ENCODE measurements at regions of chr19 and their contacts with region 1.

Region 1: DNA sequence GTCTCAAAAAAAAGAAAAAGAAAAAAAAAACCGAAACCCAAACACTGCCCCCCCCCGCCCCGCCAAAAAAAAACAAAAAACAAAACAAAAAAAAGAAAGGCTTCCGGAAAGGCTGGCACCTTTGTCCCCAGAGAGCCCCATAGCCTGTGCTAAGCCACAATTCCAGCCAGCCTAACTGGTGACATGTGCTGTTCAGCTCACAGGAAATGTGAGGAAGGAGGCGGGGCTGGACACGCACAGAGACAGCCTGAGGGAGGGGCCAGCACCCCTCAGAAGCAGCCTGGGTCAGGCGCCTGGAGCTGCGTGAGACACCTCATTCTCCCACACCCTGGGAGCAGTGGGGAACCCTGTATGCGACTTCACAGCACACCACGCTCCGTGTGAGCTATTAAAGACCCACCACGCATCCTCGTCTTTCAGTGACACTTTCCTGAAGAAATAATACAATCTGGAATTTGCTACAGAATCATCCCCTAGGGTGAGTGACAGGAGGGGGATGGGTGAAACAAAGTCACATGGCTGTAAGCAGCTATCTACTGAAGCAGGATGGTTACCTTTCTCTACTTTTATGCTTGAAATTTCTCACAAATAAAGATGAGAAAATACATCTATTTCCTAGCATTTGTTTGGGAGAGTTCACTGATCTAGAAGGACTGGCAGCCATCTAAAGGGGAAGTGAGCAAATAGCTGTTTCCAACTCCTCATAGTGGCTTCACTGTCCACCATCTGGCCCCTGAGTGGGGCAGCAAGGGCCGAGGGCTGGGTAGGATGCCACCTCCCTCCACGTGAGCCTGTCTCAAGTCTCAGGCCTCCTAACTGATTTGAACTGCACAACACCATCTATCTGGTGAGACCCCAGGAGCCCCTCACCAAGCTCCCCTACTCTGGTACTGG is 12.3 kb upstream of the SLC35E1 start:
- DNase-seq: peak; percentile 91 to 98
- ATAC-seq: peak; percentile 80 to 93 (median 82)
- H3K4me3 ChIP-seq: peak overlapping the region; percentile 44
- H3K4me3 Mint-ChIP-seq: peak overlapping the region; percentile 74
- H3K27ac ChIP-seq: peak overlapping the region; percentile 88
- H3K27ac Mint-ChIP-seq: peak overlapping the region; percentile 88 to 89
- H3K4me1 ChIP-seq: peaks cover 81% of the 10 kb centered on the region
- H3K4me1 Mint-ChIP-seq: peaks cover 54 to 86% of the 10 kb centered on the region in 2 donors
- H3K27me3 ChIP-seq: no peaks in the 10 kb centered on the region
- H3K27me3 Mint-ChIP-seq: no peaks in the 10 kb centered on the region
- CTCF ChIP-seq: no peak

Region 2: DNA sequence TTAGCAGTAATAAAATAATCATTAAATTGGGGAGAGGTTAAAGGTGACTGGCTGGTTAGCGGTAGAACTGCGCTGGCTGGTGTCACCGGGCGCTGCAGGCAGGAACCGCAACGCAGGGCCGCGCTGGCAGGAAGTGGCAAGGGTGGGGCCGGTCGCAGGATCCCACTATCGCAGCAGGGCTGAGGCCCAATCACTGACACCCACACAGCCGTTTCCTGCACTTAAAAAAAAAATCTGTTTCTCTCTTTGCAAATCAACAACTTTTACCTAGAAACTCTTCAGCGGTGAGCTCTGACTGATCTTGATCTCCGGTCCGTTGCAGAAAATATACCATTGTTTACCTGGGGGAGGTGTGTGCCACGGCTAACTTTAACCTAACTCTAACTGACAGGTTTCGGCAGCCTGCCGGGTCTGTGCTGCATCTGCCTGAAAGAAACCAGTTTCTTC is 212.9 kb before region 1 on chr19:
- intact Hi-C with region 1: loop called (anchors 5 kb)
- DNase-seq: peak; percentile 90 to 96
- ATAC-seq: peak; percentile 48 to 78 (median 73)
- H3K4me3 ChIP-seq: peak overlapping the region; percentile 13
- H3K4me3 Mint-ChIP-seq: no peak overlapping the region
- H3K27ac ChIP-seq: peak overlapping the region; percentile 94
- H3K27ac Mint-ChIP-seq: no peak overlapping the region
- H3K4me1 ChIP-seq: peaks cover 99% of the 10 kb centered on the region
- H3K4me1 Mint-ChIP-seq: peaks cover 33 to 34% of the 10 kb centered on the region in 2 donors
- H3K27me3 ChIP-seq: no peaks in the 10 kb centered on the region
- H3K27me3 Mint-ChIP-seq: no peaks in the 10 kb centered on the region
- CTCF ChIP-seq: no peak

Region 3: DNA sequence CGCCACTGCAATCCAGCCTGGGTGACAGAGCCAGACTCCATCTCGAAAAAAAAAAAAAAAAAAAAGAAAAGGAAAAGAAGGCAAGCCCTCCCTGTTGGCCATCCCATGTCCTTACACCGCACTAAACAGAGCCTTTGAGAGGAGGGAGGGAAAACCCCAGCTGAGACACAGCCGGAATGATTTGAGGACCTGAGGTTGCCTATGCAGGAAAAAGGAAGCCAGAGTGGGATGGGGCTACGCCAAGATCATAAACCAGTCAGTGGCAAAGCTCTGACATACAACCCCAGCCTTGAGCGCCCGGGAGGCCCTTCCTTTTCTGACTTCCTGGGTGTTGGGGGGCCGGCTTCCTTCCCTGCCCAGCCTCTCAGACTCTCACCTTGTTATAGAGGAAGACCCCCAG is 29.7 kb before region 1 on chr19:
- intact Hi-C with region 1: no loop called
- DNase-seq: no peak
- ATAC-seq: no peak
- H3K4me3 ChIP-seq: no peak overlapping the region
- H3K4me3 Mint-ChIP-seq: no peak overlapping the region
- H3K27ac ChIP-seq: no peak overlapping the region
- H3K27ac Mint-ChIP-seq: no peak overlapping the region
- H3K4me1 ChIP-seq: no peaks in the 10 kb centered on the region
- H3K4me1 Mint-ChIP-seq: peaks cover 0 to 4% of the 10 kb centered on the region in 2 donors
- H3K27me3 ChIP-seq: no peaks in the 10 kb centered on the region
- H3K27me3 Mint-ChIP-seq: no peaks in the 10 kb centered on the region
- CTCF ChIP-seq: no peak

Region 4: DNA sequence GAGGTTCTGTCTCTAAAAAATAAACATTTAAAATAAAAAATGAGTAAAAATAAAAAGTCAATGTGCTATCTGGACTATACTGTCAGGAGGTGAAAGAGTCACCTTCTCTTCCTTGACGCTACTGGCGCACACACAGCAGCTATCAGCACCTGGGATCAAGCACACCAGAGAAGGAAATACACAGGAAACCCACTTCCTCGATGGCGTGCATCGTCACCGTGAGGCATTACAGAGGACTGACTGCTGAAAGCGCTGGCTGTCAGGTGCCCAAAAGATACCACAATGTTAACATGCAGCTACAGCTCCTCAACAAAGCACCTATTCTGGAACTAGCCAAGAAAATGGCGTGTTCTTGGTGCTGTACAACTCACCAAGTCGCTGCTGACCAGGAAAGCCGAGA is 18.3 kb before region 1 on chr19:
- intact Hi-C with region 1: loop called (anchors 2 kb)
- DNase-seq: peak; percentile 57 to 96
- ATAC-seq: peak; percentile 96 to 98 (median 97)
- H3K4me3 ChIP-seq: no peak overlapping the region
- H3K4me3 Mint-ChIP-seq: peak overlapping the region; percentile 95
- H3K27ac ChIP-seq: peak overlapping the region; percentile 52
- H3K27ac Mint-ChIP-seq: peak overlapping the region; percentile 97 to 98
- H3K4me1 ChIP-seq: peaks cover 27% of the 10 kb centered on the region
- H3K4me1 Mint-ChIP-seq: peaks cover 9 to 10% of the 10 kb centered on the region in 2 donors
- H3K27me3 ChIP-seq: no peaks in the 10 kb centered on the region
- H3K27me3 Mint-ChIP-seq: no peaks in the 10 kb centered on the region
- CTCF ChIP-seq: no peak

Region 5: GRCh38 chr19:16572332-16573211 is 11.9 kb before region 1 on chr19 and contains the start of gene SLC35E1:
- intact Hi-C with region 1: loop called (anchors 1 kb)
- DNase-seq: peak; percentile 91 to 95
- ATAC-seq: peak; percentile 89 to 97 (median 94)
- H3K4me3 ChIP-seq: peak within 1 kb of the TSS; percentile 91
- H3K4me3 Mint-ChIP-seq: peak within 1 kb of the TSS; percentile 100
- H3K27ac ChIP-seq: peak within 1 kb of the TSS; percentile 93
- H3K27ac Mint-ChIP-seq: peak within 1 kb of the TSS; percentile 97 to 99
- H3K4me1 ChIP-seq: peaks cover 32% of the 10 kb centered on the region
- H3K4me1 Mint-ChIP-seq: peaks cover 32 to 38% of the 10 kb centered on the region in 2 donors
- H3K27me3 ChIP-seq: no peaks in the 10 kb centered on the region
- H3K27me3 Mint-ChIP-seq: no peaks in the 10 kb centered on the region
- CTCF ChIP-seq: no peak
- total RNA-seq, gene SLC35E1: 53.2 to 55.5 (median 54.2) TPM

Region 6: DNA sequence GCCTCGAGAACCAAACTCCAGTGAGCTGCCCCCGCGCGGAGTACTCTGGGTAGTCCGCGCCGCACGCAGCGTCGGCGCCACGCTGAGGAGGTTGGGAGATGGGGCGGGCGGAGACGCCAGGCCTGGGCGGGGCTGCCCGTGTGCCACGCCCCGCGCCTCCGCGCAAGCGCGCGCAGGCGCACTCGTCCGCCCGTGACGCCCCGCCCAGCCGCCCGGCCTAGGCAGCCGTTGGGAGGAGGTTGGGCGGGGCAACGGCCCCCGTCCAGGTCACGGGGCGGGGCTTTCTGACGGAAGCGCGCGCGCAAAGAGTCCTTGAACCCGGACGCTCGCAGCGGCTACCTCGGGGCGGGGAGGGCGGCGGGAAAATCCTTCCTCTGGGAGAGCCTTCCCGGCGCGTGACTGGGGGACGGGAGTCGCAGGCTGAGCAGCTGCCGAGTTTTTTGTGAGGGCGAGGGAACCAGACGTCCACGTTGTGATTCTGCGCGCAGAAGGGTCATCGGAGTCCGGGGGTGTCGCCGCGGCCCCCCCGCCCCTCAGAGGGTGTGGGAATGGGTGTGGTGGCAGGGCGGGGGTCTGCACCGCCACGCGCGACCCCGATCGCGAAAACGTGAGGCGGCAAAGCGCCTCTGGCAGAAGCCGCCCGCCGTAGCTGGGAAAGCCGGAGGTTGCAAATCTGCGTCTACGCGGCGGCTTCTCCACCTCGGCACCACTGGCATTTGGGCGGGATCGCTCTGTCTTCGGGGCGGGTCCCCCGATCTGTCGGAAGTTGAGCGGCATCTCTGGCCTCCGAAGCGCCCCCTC is 43.9 kb after region 1 on chr19 and contains the start of gene MED26:
- intact Hi-C with region 1: loop called (anchors 1 kb)
- DNase-seq: peak; percentile 94 to 97
- ATAC-seq: peak; percentile 94 to 99 (median 94)
- H3K4me3 ChIP-seq: peak within 1 kb of the TSS; percentile 79
- H3K4me3 Mint-ChIP-seq: peak within 1 kb of the TSS; percentile 92
- H3K27ac ChIP-seq: peak within 1 kb of the TSS; percentile 77
- H3K27ac Mint-ChIP-seq: peak within 1 kb of the TSS; percentile 85 to 95
- H3K4me1 ChIP-seq: peaks cover 18% of the 10 kb centered on the region
- H3K4me1 Mint-ChIP-seq: peaks cover 28 to 42% of the 10 kb centered on the region in 2 donors
- H3K27me3 ChIP-seq: no peaks in the 10 kb centered on the region
- H3K27me3 Mint-ChIP-seq: no peaks in the 10 kb centered on the region
- CTCF ChIP-seq: no peak
- total RNA-seq, gene MED26: 34.7 to 47.5 (median 47.3) TPM

Region 7: DNA sequence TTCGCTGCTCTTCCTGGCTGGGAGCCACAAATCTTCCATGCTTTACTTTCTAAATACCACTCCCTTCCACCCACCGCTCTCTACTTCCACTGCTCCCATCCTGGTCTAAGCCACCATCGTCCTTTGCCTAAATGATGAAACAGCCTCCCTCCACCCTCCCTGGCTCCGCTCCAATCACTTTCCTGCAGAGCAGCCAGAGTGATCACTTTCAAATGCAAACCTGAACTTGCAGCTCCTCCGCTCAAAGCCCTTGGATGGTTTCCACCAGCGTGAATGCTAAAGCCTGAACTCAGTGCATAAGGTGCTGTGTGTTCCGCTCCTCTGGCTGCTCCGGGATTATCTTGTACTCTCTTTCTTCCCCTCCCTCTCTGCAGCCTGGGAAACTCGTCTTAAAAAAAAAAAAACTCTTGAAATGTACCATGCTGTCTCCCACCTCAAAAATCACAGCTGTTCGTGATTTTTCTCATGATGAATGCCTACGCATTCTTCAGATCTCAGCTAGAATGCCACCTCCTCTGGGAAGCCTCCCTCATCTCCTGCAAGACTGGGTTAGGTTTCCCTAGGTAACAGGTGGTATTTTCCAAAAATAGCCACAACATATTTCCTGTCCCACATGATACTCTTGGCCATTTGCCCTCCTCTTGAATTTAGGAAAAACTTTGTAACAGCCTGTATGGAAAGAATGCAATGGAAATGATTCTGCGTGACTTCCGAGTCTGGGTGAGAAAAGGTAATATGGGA is 241.0 kb after region 1 on chr19:
- intact Hi-C with region 1: no loop called
- DNase-seq: no peak
- ATAC-seq: no peak
- H3K4me3 ChIP-seq: no peak overlapping the region
- H3K4me3 Mint-ChIP-seq: no peak overlapping the region
- H3K27ac ChIP-seq: no peak overlapping the region
- H3K27ac Mint-ChIP-seq: no peak overlapping the region
- H3K4me1 ChIP-seq: peaks cover 22% of the 10 kb centered on the region
- H3K4me1 Mint-ChIP-seq: peaks cover 16 to 18% of the 10 kb centered on the region in 2 donors
- H3K27me3 ChIP-seq: peaks cover 8% of the 10 kb centered on the region
- H3K27me3 Mint-ChIP-seq: peaks cover 28 to 30% of the 10 kb centered on the region in 2 donors
- CTCF ChIP-seq: no peak

Region 8: GRCh38 chr19:16910750-16911445 is 326.4 kb after region 1 on chr19:
- intact Hi-C with region 1: no loop called
- DNase-seq: no peak
- ATAC-seq: no peak
- H3K4me3 ChIP-seq: no peak overlapping the region
- H3K4me3 Mint-ChIP-seq: no peak overlapping the region
- H3K27ac ChIP-seq: no peak overlapping the region
- H3K27ac Mint-ChIP-seq: no peak overlapping the region
- H3K4me1 ChIP-seq: no peaks in the 10 kb centered on the region
- H3K4me1 Mint-ChIP-seq: no peaks in the 10 kb centered on the region
- H3K27me3 ChIP-seq: no peaks in the 10 kb centered on the region
- H3K27me3 Mint-ChIP-seq: peaks cover 0 to 6% of the 10 kb centered on the region in 2 donors
- CTCF ChIP-seq: no peak